GM10248 (cell line): ENCODE measurements at regions of chr6 and their contacts with region 1.

Region 1: GRCh38 chr6:127266178-127266891 is at the start of gene RNF146:
- DNase-seq: peak; percentile 90
- CTCF ChIP-seq: peak; percentile 69

Region 2: DNA sequence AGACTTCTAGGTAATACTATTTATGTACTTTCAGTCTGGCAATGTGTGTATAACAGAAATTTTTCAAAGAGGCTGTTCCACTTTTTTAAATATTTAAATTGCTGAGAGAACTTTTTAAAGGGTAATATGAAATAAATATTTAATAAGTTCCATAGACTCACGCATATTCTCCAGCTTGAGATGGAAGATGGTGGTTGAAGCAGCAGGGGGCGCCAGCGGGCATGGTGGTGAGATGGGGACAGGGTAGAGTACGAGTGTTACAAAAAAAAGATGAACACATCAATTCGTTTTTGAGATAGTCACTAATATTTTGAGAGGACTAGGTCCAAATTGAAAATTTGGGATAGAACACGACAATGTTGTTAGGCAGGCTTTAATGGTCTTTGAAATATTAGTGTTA is 79.4 kb before region 1 on chr6:
- CTCF ChIA-PET with region 1: interaction called, 19 read pairs
- POLR2A ChIA-PET with region 1: no interaction called
- DNase-seq: peak; percentile 26
- CTCF ChIP-seq: peak; percentile 52

Region 3: GRCh38 chr6:127198549-127198948 is 67.8 kb before region 1 on chr6:
- CTCF ChIA-PET with region 1: no interaction called
- POLR2A ChIA-PET with region 1: no interaction called
- DNase-seq: no peak
- CTCF ChIP-seq: no peak

Region 4: DNA sequence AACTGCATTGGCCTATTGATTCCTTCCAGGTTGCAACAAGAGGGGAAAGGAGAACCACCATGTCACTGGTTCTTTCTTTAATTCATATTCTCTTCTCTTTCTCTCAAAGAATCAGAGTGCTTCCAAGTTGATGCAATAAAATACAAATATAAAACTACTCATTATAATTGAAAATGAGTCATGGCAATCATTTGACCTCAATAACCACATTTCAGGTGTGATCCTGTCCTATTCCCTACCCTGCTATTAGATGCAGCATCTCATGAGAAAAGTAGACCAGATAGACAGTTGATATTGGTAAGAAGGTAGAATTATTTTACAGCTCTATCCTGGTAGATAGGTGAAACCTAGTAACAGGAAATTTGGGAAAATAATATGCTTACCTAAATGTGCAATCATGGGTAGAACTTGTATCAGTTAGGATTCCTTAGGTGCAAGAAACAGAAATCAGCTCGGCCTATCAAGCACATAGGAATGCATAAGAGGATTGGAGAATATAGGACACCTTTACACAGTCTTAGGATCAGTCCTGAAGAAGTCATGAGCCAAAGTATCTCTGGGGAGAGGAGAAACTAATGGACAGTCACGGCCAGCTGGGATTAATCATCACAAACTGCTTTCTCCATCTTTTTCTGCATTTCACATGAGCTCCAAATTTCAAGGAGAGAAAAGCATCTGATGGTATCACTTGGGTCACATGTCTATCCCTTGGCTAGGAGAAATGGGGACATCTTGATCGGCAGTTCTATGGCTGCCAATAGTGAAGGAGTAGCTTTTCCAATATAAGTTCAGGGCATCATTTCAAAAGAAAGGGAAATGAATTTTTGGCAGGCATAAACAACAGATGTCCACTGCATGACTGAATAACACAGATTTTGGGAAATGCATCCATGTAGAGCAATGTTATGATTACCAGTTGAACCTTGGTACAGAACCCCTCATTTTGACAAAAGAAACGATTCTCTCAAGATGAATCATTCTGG is 18.9 kb before region 1 on chr6:
- CTCF ChIA-PET with region 1: interaction called, 12 read pairs
- POLR2A ChIA-PET with region 1: no interaction called
- DNase-seq: no peak
- CTCF ChIP-seq: no peak

Region 5: GRCh38 chr6:127255286-127255685 is 11.0 kb before region 1 on chr6:
- CTCF ChIA-PET with region 1: interaction called, 23 read pairs
- POLR2A ChIA-PET with region 1: no interaction called
- DNase-seq: no peak
- CTCF ChIP-seq: no peak

Region 6: DNA sequence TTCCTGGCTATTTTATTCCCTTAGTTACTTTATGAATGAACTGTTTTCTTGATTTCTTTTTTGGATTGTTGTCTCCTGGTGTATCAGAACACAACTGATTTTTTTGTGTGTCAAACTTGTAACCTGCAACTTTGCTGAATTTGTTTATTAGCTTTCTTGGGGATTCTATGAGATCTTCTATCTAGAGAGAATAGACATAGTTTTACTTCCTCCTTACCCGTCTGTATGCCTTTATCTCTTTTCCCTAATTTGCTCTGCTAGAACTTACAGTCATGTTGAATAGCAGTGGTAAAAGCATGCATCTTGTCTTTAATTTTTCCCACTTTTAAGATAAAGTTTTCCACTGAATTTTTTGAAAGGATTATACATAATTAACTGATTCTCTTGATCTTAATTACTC is 13.5 kb after region 1 on chr6:
- CTCF ChIA-PET with region 1: interaction called, 23 read pairs
- POLR2A ChIA-PET with region 1: interaction called, 3 read pairs
- DNase-seq: no peak
- CTCF ChIP-seq: no peak

Region 7: DNA sequence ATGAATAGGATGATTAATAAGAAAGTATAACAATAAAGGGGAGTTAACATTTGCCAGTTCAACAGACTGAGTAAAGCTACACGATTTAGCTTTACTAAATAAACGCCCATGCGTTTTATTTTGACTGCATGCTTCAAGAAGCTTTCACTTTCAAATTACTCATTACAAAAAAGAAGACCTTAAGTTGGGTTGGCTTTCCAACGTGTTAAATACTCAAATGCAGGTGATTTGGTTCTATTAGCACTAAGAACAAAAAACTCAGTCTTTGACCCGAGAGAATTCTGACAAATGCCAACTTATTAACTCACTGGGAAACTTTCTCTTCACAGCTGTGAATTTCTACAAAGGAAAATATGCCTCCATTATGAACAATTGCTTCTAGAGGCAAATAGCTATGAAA is 25.2 kb after region 1 on chr6:
- CTCF ChIA-PET with region 1: interaction called, 12 read pairs
- POLR2A ChIA-PET with region 1: no interaction called
- DNase-seq: peak; percentile 22
- CTCF ChIP-seq: no peak

Region 8: GRCh38 chr6:127302728-127303660 is 36.7 kb after region 1 on chr6:
- CTCF ChIA-PET with region 1: interaction called, 11 read pairs
- POLR2A ChIA-PET with region 1: no interaction called
- DNase-seq: peak; percentile 42
- CTCF ChIP-seq: peak; percentile 76